GM10248 (cell line): ENCODE measurements at regions of chr3 and their contacts with region 1.

Region 1: GRCh38 chr3:179852142-179852905 is 184.4 kb downstream of the PEX5L start:
- DNase-seq: peak; percentile 37
- CTCF ChIP-seq: peak; percentile 20

Region 2: GRCh38 chr3:179811321-179812095 is 40.8 kb before region 1 on chr3:
- CTCF ChIA-PET with region 1: interaction called, 22 read pairs
- POLR2A ChIA-PET with region 1: no interaction called
- DNase-seq: peak; percentile 64
- CTCF ChIP-seq: peak; percentile 64

Region 3: DNA sequence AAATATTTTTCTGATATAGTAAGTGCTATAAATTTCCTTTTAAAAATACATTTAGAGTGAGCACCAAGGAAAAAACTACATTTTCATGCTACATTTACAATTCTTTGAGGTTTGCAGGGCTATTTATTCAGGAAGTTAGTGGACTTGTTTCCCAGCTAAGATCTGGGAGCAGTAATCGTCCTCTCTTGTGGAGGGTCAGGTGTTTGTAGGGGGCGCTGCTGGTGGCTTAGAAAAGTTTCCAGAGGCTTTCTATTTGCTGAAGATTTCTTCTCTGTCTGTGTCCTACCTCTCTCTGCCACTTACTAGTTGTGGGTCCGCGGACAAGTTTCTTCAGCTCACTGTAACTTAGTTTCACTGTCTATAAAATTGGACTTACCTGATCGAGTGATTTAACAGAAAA is 20.5 kb after region 1 on chr3:
- CTCF ChIA-PET with region 1: interaction called, 19 read pairs
- POLR2A ChIA-PET with region 1: no interaction called
- DNase-seq: no peak
- CTCF ChIP-seq: no peak